Cardiac septum (tissue), 1 donor: ENCODE measurements at regions of chr3 and their contacts with region 1.

Region 1: DNA sequence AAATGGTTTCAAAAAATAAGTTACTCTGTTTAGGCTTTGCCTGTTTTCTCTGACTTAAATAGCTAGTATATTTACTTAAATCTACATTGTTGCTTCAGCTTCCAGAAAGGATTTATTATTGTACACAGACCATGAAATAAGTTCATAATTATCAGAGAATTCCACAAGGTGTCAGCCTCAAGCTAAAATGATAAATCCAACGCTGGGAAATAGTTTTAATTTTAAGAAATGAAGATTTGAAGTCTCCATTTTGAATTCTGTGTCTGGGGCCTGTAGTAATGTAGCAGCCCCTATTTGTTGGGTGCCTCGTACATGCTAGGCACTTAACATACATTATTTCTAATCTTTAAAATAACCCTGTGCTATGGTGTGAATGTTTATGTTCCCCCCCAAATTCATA is 92.6 kb upstream of the KCNMB2 start:
- DNase-seq: no peak

Region 2: GRCh38 chr3:178001670-178002101 is 441.9 kb before region 1 on chr3:
- intact Hi-C with region 1: no loop called
- DNase-seq: no peak

Region 3: GRCh38 chr3:178507507-178508446 is 64.1 kb after region 1 on chr3:
- intact Hi-C with region 1: no loop called
- DNase-seq: no peak

Region 4: DNA sequence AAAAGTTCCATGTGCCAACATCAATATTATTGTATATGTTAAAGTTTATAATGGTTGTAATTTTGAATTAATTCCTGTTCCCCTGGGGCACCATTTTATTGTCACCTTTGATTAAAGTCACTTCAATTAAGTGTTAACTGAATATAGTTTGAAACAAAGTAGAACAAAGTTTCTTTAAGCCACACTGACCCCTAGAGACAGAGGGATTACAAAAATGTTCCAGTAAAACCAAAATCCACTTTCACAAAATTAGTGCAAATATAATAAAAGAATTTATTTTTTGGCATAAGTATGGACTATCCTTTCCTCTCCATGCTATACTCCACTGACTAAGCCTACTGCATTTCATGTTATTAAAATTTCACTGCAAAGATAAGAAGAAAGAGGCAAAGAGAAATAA is 504.1 kb after region 1 on chr3:
- intact Hi-C with region 1: loop called (anchors 5 kb)
- DNase-seq: no peak